Left lung (tissue), 14 donors: ENCODE measurements at regions of chr11 and their contacts with region 1.

Region 1: GRCh38 chr11:2885676-2886081 is at the start of gene CDKN1C:
- DNase-seq: peak; percentile 87 to 95 (median 94)
- ATAC-seq: peak; percentile 85
- H3K4me3 ChIP-seq: peak within 1 kb of the TSS; percentile 60 to 75
- H3K27ac ChIP-seq: peak within 1 kb of the TSS; percentile 67 to 75
- H3K4me1 ChIP-seq: peaks cover under 1 to 37% of the 10 kb centered on the region in 2 donors
- H3K27me3 ChIP-seq: peaks cover 0 to 62% of the 10 kb centered on the region in 2 donors
- CTCF ChIP-seq: no peak
- polyA plus RNA-seq, gene CDKN1C: 52.2 to 90.1 (median 74.3) TPM

Region 2: GRCh38 chr11:2532704-2533586 is 352.7 kb before region 1 on chr11:
- intact Hi-C with region 1: loop called (anchors 1 to 5 kb)
- DNase-seq: peak; percentile 90 to 99 (median 92)
- ATAC-seq: peak; percentile 91
- H3K4me3 ChIP-seq: peak overlapping the region in 1 of 2 donors; percentile 24
- H3K27ac ChIP-seq: peak overlapping the region in 1 of 2 donors; percentile 13
- H3K4me1 ChIP-seq: peaks cover 7 to 23% of the 10 kb centered on the region in 2 donors
- H3K27me3 ChIP-seq: no peaks in the 10 kb centered on the region
- CTCF ChIP-seq: peak; percentile 99

Region 3: GRCh38 chr11:2975594-2975993 is 89.9 kb after region 1 on chr11:
- intact Hi-C with region 1: no loop called
- DNase-seq: no peak
- ATAC-seq: peak; percentile 65
- H3K4me3 ChIP-seq: no peak overlapping the region
- H3K27ac ChIP-seq: no peak overlapping the region
- H3K4me1 ChIP-seq: no peaks in the 10 kb centered on the region
- H3K27me3 ChIP-seq: no peaks in the 10 kb centered on the region
- CTCF ChIP-seq: peak in 1 of 2 donors; percentile 23

Region 4: DNA sequence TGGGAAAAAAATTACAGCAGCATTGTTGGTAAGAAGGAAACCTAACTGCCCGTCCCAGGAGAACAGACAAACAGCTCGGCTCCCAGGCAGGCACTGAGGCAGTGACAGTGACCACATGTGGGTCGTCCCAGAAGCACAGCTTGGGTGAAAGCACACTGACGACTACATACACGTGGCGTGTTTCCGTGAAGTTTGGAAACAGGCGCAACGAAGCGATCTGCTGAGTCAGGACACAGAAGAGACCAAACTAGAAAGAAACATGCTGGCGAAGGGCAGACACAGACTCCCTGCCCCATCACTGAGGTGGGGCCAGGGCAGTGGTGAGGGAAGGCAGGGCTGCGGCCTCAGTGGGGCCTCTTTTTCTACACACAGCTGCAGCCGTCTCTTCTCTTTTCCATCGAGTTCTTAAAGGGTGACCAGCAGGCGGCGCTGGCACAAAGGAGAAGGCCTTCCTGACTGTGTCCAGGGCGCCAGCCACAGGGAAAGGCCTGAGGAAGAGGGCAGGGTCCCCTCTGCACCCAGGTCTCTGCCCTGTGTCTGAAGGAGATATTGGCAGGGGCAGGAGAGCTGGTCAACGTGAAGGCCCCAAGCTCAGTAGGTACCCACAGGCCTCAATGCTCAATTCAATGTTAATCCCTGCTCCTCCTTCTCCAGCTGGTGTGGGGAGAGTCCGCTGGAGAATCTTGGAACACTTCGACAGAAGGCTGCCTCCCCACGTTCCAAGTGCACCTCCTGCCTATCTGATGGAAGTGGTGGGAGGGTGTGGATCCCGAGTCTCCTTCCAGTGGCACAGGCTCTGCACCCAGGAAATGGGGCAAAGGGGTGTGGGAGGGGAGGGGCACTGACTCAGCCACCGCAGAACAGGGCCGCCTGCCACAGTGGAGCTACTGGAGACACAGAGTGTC is 151.6 kb after region 1 on chr11:
- intact Hi-C with region 1: no loop called
- DNase-seq: peak; percentile 51 to 91 (median 74)
- ATAC-seq: peak; percentile 90
- H3K4me3 ChIP-seq: no peak overlapping the region
- H3K27ac ChIP-seq: peak overlapping the region in 1 of 2 donors; percentile 38
- H3K4me1 ChIP-seq: peaks cover 0 to 31% of the 10 kb centered on the region in 2 donors
- H3K27me3 ChIP-seq: no peaks in the 10 kb centered on the region
- CTCF ChIP-seq: peak; percentile 63 to 69